HCT116 (cell line): ENCODE measurements at regions of chrX and their contacts with region 1.

Region 1: GRCh38 chrX:74015379-74016019 is 288.5 kb upstream of the ZCCHC13 start:
- DNase-seq: peak; percentile 40
- ATAC-seq: peak; percentile 88
- H3K4me3 ChIP-seq: no peak overlapping the region
- H3K27ac ChIP-seq: no peak overlapping the region
- H3K4me1 ChIP-seq: no peaks in the 10 kb centered on the region
- H3K27me3 ChIP-seq: no peaks in the 10 kb centered on the region
- CTCF ChIP-seq: peak; percentile 51 to 69 (median 53); a peak in 5 of 6 replicates
- POLR2A ChIP-seq: no peak
- RAD21 ChIP-seq: peak; percentile 78

Region 2: GRCh38 chrX:73076838-73077237 is 938.7 kb before region 1 on chrX:
- CTCF ChIA-PET with region 1: no interaction called
- POLR2A ChIA-PET with region 1: no interaction called
- RAD21 ChIA-PET with region 1: no interaction called
- intact Hi-C with region 1: loop called (anchors 10 kb)
- DNase-seq: no peak
- ATAC-seq: no peak
- H3K4me3 ChIP-seq: no peak overlapping the region
- H3K27ac ChIP-seq: no peak overlapping the region
- H3K4me1 ChIP-seq: no peaks in the 10 kb centered on the region
- H3K27me3 ChIP-seq: no peaks in the 10 kb centered on the region
- CTCF ChIP-seq: no peak
- POLR2A ChIP-seq: no peak
- RAD21 ChIP-seq: no peak

Region 3: GRCh38 chrX:74133156-74133796 is 117.8 kb after region 1 on chrX:
- CTCF ChIA-PET with region 1: no interaction called
- POLR2A ChIA-PET with region 1: no interaction called
- RAD21 ChIA-PET with region 1: no interaction called
- intact Hi-C with region 1: loop called (anchors 5 kb)
- DNase-seq: peak; percentile 10
- ATAC-seq: peak; percentile 71
- H3K4me3 ChIP-seq: no peak overlapping the region
- H3K27ac ChIP-seq: no peak overlapping the region
- H3K4me1 ChIP-seq: no peaks in the 10 kb centered on the region
- H3K27me3 ChIP-seq: no peaks in the 10 kb centered on the region
- CTCF ChIP-seq: peak; percentile 35 to 63 (median 48); a peak in 5 of 6 replicates
- POLR2A ChIP-seq: no peak
- RAD21 ChIP-seq: peak; percentile 75